ENCODE measurements at regions of chr17 and their contacts with region 1.

Region 1: GRCh38 chr17:1179818-1180742 is at the start of gene ABR:
- DNase-seq: peak; percentile 16
- ATAC-seq: peak; percentile 68
- H3K4me3 ChIP-seq: peak within 1 kb of the TSS; percentile 99
- H3K27ac ChIP-seq: peak within 1 kb of the TSS; percentile 73; the same call in 1 of the 2 replicates
- H3K4me1 ChIP-seq: peaks cover 17% of the 10 kb centered on the region
- H3K27me3 ChIP-seq: no peaks in the 10 kb centered on the region
- CTCF ChIP-seq: no peak
- POLR2A ChIP-seq: peak; percentile 46; the same call in 1 of the 2 replicates
- RAD21 ChIP-seq: no peak
- total RNA-seq, gene ABR: 24.7 and 28.3 TPM in 2 replicates

Region 2: GRCh38 chr17:996554-997344 is 183.3 kb before region 1 on chr17 and contains the start of gene TIMM22:
- CTCF ChIA-PET with region 1: no interaction called
- POLR2A ChIA-PET with region 1: no interaction called
- dilution Hi-C with region 1: no loop called
- in situ Hi-C with region 1: no loop called
- intact Hi-C with region 1: no loop called
- DNase-seq: peak; percentile 97
- ATAC-seq: peak; percentile 92
- H3K4me3 ChIP-seq: peak within 1 kb of the TSS; percentile 54
- H3K27ac ChIP-seq: peak within 1 kb of the TSS; percentile 95
- H3K4me1 ChIP-seq: peaks cover 20% of the 10 kb centered on the region
- H3K27me3 ChIP-seq: no peaks in the 10 kb centered on the region
- CTCF ChIP-seq: peak; percentile 95
- POLR2A ChIP-seq: peak; percentile 72
- RAD21 ChIP-seq: peak; percentile 88
- total RNA-seq, gene TIMM22: 12.7 and 14.4 TPM in 2 replicates

Region 3: DNA sequence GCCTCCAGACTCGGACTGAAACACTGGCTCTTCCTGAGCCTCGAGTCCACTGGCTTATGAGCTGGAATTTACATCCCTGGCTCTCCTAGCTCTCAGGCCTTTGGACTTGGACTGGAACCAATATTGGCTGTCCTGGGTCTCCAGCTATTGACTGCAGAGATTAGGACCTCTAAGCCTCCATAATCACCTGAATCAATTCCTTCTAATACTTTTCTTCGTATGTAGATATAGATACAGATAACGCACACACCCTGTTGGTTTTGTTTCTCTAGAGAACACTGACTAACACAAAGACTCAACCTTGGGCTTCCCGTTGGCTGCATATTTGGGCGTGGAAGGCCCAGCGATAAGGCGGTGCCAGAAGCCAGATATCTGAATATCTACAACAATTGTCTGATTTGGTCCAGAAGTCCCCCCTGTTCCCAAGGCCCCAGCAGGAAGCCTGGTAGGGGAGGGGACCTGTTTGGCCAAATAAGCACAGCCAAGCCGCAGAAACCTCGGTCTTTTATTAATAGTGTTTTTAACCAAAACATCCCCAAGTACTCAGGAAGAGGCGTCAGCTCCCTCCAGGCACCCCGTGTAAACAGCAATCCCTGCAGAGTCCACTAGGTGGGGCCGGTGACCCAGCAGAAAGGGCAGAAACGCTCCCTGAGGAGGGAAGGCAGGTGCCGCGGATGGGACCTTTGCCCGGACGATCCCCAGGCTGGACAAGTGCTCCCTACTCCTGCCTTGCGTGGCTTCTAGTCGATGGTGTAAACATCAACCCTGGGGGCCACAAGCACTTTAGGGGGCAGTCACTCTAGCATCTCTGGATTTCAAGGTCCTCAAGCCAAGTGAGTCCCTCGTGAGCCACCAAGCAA is 57.3 kb before region 1 on chr17:
- CTCF ChIA-PET with region 1: interaction called, 8 read pairs
- POLR2A ChIA-PET with region 1: no interaction called
- dilution Hi-C with region 1: no loop called
- in situ Hi-C with region 1: loop called (anchors 10 kb)
- intact Hi-C with region 1: no loop called
- DNase-seq: peak; percentile 58
- ATAC-seq: peak; percentile 99
- H3K4me3 ChIP-seq: no peak overlapping the region
- H3K27ac ChIP-seq: no peak overlapping the region
- H3K4me1 ChIP-seq: no peaks in the 10 kb centered on the region; the same call in 1 of the 2 replicates
- H3K27me3 ChIP-seq: no peaks in the 10 kb centered on the region
- CTCF ChIP-seq: peak; percentile 92
- POLR2A ChIP-seq: no peak
- RAD21 ChIP-seq: peak; percentile 95